ENCODE measurements at regions of chr7 and their contacts with region 1.

Region 1: GRCh38 chr7:71511361-71511807 is 379.4 kb downstream of the GALNT17 start:
- DNase-seq: no peak
- H3K4me3 ChIP-seq: no peak overlapping the region
- H3K27ac ChIP-seq: no peak overlapping the region
- H3K4me1 ChIP-seq: peaks cover 0 to 18% (median 16%) of the 10 kb centered on the region in 4 donors
- H3K27me3 ChIP-seq: no peaks in the 10 kb centered on the region
- CTCF ChIP-seq: no peak
- EP300 ChIP-seq: no peak
- POLR2A ChIP-seq: no peak

Region 2: DNA sequence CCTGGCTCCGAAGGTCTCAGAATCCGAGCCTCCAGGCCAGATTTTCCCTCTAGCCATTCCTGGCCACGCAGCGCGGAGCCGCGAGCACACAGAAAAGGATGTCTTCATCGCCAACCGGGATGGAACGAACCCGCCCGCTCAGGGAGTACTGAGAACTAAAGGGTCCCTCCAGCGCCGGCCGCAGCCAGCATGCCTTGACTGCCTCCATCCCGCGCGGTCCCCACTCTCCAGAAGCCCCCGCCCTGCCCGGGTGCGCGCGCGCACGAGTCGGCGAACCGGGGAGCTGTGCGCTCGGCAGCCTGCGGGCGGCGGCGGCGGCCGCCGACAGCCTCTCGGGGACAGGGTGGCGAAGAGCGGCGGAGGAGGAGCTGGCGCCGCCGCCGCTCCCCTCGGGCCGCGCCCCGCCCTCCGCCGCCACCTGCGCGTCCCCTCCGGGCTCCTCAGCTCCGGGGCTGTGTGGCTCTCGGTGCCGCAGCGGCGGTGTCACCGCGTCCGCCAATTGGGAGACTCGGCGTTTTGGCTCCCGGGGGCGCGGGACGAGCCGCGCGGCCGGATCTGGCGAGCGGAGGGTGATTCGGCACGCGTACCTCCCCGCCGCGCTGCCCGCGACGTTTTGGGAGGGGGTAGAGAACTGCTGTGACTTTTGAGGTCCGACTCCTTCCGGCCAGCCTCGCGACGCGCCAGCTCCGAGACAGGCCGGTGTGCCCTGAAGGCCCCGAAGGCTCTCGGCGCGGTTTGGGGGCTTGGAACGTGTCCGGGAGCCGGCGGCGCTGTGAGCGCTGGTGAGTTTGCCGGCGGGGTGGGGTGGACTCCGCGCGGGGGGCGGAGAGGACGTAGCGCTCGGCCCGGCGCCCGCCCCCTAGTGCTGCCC is 379.9 kb before region 1 on chr7:
- intact Hi-C with region 1: loop called (anchors 10 kb)
- DNase-seq: no peak
- H3K4me3 ChIP-seq: peak overlapping the region; percentile 79 to 86 (median 82)
- H3K27ac ChIP-seq: peak overlapping the region; percentile 81 to 90 (median 85)
- H3K4me1 ChIP-seq: peaks cover 0 to 60% (median 47%) of the 10 kb centered on the region in 4 donors
- H3K27me3 ChIP-seq: peaks cover 0 to 26% (median 0%) of the 10 kb centered on the region in 4 donors
- CTCF ChIP-seq: peak; percentile 43 to 52 (median 49)
- EP300 ChIP-seq: no peak
- POLR2A ChIP-seq: no peak

Region 3: GRCh38 chr7:71389976-71390375 is 121.4 kb before region 1 on chr7:
- intact Hi-C with region 1: no loop called
- DNase-seq: no peak
- H3K4me3 ChIP-seq: no peak overlapping the region
- H3K27ac ChIP-seq: no peak overlapping the region
- H3K4me1 ChIP-seq: no peaks in the 10 kb centered on the region
- H3K27me3 ChIP-seq: no peaks in the 10 kb centered on the region
- CTCF ChIP-seq: no peak
- EP300 ChIP-seq: no peak
- POLR2A ChIP-seq: no peak

Measured in esophagus muscularis mucosa (tissue), 4 donors.